Heart right ventricle (tissue), 16 donors: ENCODE measurements at regions of chr1 and their contacts with region 1.

Region 1: DNA sequence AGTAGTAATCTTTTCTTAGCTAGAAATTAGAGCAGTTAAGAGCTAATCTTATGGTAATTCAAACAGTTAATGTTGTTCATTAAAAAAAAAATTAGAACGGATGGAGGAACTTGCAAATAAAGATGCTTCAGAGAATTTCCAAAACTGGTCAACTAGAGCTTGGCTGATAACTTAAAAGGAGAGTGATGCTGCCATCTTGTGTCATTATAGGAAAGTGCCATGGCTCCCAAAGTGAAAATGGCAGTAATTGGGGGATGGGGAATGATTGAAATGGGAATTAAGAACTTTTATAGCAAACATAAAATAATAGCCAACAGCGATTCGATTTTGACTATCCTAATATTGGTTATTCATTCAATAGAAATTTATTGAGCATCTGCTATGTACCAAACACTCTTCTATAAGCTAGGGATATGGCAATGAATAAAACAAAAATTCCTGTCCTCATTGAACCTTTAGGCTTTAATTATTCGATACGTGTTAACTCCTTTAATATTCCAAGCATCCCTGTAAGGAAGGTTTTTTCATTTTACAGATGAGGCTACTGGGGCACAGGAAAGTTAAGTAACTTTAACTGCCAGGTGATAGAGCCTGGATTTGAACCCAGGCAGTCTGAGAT is 5.7 kb upstream of the PLPP3 start:
- DNase-seq: peak in 1 of 2 donors; percentile 42
- ATAC-seq: peak; percentile 32 to 81 (median 68)
- H3K4me3 ChIP-seq: no peak overlapping the region
- H3K27ac ChIP-seq: no peak overlapping the region
- H3K4me1 ChIP-seq: peaks cover 0 to 17% (median 3%) of the 10 kb centered on the region in 9 donors
- H3K27me3 ChIP-seq: no peaks in the 10 kb centered on the region
- CTCF ChIP-seq: peak; percentile 78 to 94 (median 87)

Region 2: DNA sequence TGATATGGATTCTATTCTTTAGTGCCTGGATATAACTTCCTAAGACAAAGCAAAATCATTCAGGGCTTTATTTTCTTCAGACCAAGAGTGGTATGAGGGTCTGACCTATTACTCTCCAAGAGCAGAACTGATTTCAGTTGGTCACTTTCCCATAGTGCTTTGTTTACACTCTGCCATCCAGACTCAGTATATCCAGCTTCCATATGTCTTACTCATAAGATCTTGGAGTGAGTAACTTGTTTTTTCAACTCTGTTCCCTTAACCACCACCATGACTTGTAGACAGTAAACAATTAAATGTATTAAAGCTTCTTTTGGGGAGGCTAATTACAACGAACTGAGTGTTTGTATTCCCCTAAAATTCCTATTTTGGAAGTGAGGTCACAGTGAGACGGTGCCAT is 1453.2 kb before region 1 on chr1:
- intact Hi-C with region 1: loop called in 4 of 10 experiments (anchors 10 kb)
- DNase-seq: no peak
- ATAC-seq: no peak
- H3K4me3 ChIP-seq: no peak overlapping the region
- H3K27ac ChIP-seq: no peak overlapping the region
- H3K4me1 ChIP-seq: peaks cover 0 to 24% (median 5%) of the 10 kb centered on the region in 9 donors
- H3K27me3 ChIP-seq: no peaks in the 10 kb centered on the region
- CTCF ChIP-seq: no peak

Region 3: DNA sequence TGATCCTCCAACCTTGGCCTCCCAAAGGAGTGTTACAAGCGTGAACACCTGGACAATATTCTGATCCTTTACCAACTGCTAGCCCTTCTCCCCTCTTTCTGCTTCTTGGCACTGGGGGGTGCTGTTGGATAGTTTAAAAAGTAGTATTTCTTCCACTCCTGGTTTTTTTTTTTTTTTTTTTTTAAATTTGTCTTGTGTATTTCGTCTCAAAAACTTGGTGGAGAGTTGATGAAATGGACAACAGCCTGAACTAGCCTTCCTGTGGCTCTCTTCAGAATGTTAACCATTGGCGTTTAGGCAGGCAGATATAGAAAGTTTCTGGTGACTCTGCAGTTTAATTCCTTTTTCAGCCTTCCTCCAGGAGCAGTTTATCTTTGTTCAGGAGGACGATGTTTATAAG is 1300.2 kb before region 1 on chr1:
- intact Hi-C with region 1: loop called (anchors 1 to 5 kb)
- DNase-seq: peak in 1 of 2 donors; percentile 62
- ATAC-seq: peak; percentile 55 to 77 (median 70)
- H3K4me3 ChIP-seq: no peak overlapping the region
- H3K27ac ChIP-seq: no peak overlapping the region
- H3K4me1 ChIP-seq: peaks cover 0 to 6% (median 0%) of the 10 kb centered on the region in 9 donors
- H3K27me3 ChIP-seq: no peaks in the 10 kb centered on the region
- CTCF ChIP-seq: peak; percentile 20 to 82 (median 72)

Region 4: GRCh38 chr1:55478742-55479141 is 1106.3 kb before region 1 on chr1:
- intact Hi-C with region 1: loop called in 3 of 10 experiments (anchors 2 to 10 kb)
- DNase-seq: no peak
- ATAC-seq: no peak
- H3K4me3 ChIP-seq: no peak overlapping the region
- H3K27ac ChIP-seq: no peak overlapping the region
- H3K4me1 ChIP-seq: peaks cover 0 to 32% (median 12%) of the 10 kb centered on the region in 9 donors
- H3K27me3 ChIP-seq: no peaks in the 10 kb centered on the region
- CTCF ChIP-seq: peak in 6 of 9 donors; percentile 21 to 40 (median 31)

Region 5: DNA sequence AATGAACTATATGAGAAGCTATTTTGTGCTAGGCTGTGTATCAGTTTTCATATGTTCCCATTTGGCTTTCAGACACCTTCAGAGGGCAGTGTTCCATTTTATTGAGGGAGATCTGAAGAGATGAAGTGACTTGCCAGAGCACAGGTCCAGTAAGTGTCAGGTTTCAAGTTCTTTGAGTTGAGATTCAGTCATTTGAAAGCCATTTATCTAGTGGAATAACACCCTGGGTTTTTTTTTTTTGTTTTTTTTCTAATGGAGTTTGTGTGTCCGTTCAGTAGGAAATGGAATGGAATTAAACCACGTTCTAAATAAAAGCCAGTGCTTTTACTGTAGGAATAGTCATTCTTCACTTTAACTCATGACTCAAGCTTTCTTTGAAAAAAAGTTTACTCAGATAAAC is 717.0 kb before region 1 on chr1:
- intact Hi-C with region 1: loop called in 1 of 10 experiments (anchors 10 kb)
- DNase-seq: no peak
- ATAC-seq: peak in 2 of 8 donors; percentile 25 to 50
- H3K4me3 ChIP-seq: no peak overlapping the region
- H3K27ac ChIP-seq: peak overlapping the region in 1 of 10 donors; percentile 17
- H3K4me1 ChIP-seq: peaks cover 0 to 20% (median 5%) of the 10 kb centered on the region in 9 donors
- H3K27me3 ChIP-seq: no peaks in the 10 kb centered on the region
- CTCF ChIP-seq: peak in 1 of 9 donors; percentile 21

Region 6: DNA sequence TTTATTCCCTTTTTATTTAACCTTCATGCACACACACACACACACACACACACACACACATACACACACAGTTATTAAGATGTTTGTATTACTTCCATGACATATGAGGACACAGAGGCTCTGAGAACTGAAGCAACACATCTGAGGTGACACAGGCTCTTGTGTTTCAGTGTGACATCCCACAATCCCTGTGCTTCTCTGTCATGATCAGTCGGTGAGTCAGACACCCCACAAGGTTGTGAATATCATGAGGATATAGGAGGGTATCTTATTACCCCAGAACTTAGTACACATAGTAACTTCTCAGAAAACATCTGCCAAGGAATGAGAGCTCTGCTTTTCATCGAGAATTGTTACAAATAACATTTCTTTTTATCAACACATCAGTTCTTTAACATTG is 465.0 kb before region 1 on chr1:
- intact Hi-C with region 1: no loop called
- DNase-seq: no peak
- ATAC-seq: no peak
- H3K4me3 ChIP-seq: no peak overlapping the region
- H3K27ac ChIP-seq: no peak overlapping the region
- H3K4me1 ChIP-seq: no peaks in the 10 kb centered on the region
- H3K27me3 ChIP-seq: no peaks in the 10 kb centered on the region
- CTCF ChIP-seq: no peak

Region 7: GRCh38 chr1:56189946-56190792 is 394.9 kb before region 1 on chr1:
- intact Hi-C with region 1: loop called in 1 of 10 experiments (anchors 5 kb)
- DNase-seq: peak in 1 of 2 donors; percentile 40
- ATAC-seq: peak in 7 of 8 donors; percentile 63 to 92 (median 81)
- H3K4me3 ChIP-seq: no peak overlapping the region
- H3K27ac ChIP-seq: peak overlapping the region in 5 of 10 donors; percentile 35 to 54 (median 38)
- H3K4me1 ChIP-seq: peaks cover 0 to 39% (median 19%) of the 10 kb centered on the region in 9 donors
- H3K27me3 ChIP-seq: no peaks in the 10 kb centered on the region
- CTCF ChIP-seq: peak; percentile 11 to 70 (median 51)

Region 8: GRCh38 chr1:56709269-56709880 is 124.4 kb after region 1 on chr1:
- intact Hi-C with region 1: loop called in 2 of 10 experiments (anchors 5 to 10 kb)
- DNase-seq: no peak
- ATAC-seq: peak; percentile 38 to 78 (median 58)
- H3K4me3 ChIP-seq: no peak overlapping the region
- H3K27ac ChIP-seq: peak overlapping the region in 1 of 10 donors; percentile 2
- H3K4me1 ChIP-seq: peaks cover 0 to 36% (median 4%) of the 10 kb centered on the region in 9 donors
- H3K27me3 ChIP-seq: no peaks in the 10 kb centered on the region
- CTCF ChIP-seq: peak; percentile 28 to 73 (median 60)